Heart left ventricle (tissue), 16 donors: ENCODE measurements at regions of chr9 and their contacts with region 1.

Region 1: GRCh38 chr9:117013440-117013995 is 326.4 kb downstream of the TRIM32 start:
- DNase-seq: no peak
- ATAC-seq: no peak
- H3K4me3 ChIP-seq: no peak overlapping the region
- H3K27ac ChIP-seq: no peak overlapping the region
- H3K4me1 ChIP-seq: no peaks in the 10 kb centered on the region
- H3K27me3 ChIP-seq: no peaks in the 10 kb centered on the region
- CTCF ChIP-seq: no peak
- POLR2A ChIP-seq: no peak

Region 2: DNA sequence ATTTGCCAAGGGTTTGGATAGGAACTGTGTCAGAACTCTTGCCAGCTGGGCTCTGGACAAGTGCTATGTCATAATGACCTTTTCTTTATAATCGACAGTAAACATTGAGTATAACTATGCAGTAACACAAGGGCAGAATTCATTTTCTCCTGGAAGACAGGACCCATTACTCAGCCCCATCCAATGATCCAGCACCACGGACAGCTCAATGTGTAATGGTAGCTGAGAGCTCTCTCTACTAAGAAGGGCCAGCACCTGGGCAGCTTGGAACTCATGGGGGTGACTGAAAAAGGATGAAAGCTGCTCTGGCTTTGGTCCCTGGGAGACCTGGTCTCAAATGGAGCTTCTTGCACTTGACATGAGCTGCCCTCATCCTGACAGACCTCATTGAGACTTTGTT is 21.3 kb after region 1 on chr9:
- intact Hi-C with region 1: loop called in 1 of 10 experiments (anchors 2 kb)
- DNase-seq: no peak
- ATAC-seq: no peak
- H3K4me3 ChIP-seq: no peak overlapping the region
- H3K27ac ChIP-seq: no peak overlapping the region
- H3K4me1 ChIP-seq: peaks cover 0 to 5% (median 0%) of the 10 kb centered on the region in 12 donors
- H3K27me3 ChIP-seq: no peaks in the 10 kb centered on the region
- CTCF ChIP-seq: no peak
- POLR2A ChIP-seq: no peak

Region 3: DNA sequence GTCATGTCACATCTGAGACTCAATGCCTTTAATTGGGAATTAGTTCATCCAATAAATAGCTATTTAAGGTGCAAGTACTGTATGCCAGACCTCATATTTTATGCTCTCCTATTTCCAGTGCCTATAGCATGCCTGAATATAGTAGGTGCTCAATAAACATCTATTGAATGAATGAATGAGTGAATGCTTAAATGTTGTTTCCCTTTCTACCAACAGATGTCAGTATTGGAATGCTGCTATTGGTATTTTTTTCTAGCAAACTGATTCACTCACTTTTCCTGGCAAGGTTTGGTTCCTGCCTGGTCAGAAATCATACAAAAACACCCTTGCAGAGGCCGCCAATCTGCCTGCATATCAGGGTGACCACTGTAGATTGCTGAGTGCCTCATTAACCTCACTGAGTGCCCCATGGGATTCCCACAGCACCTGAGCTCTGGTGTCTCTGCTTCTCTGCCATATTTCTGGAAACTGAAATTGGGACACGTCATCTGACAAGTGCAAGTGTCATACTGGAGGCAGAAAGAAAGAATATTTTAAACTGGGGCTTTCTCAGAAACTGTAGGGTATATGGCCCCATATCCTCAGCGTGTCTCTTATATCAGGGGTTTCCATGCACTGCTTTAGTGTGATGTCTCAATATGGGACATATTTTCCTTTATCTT is 33.3 kb after region 1 on chr9:
- intact Hi-C with region 1: no loop called
- DNase-seq: no peak
- ATAC-seq: no peak
- H3K4me3 ChIP-seq: no peak overlapping the region
- H3K27ac ChIP-seq: no peak overlapping the region
- H3K4me1 ChIP-seq: no peaks in the 10 kb centered on the region
- H3K27me3 ChIP-seq: peaks cover 0 to 4% (median 0%) of the 10 kb centered on the region in 9 donors
- CTCF ChIP-seq: no peak
- POLR2A ChIP-seq: no peak